ENCODE measurements at regions of chr11 and their contacts with region 1.

Region 1: GRCh38 chr11:17504330-17505107 is 27.9 kb upstream of the ABCC8 start:
- DNase-seq: peak; percentile 59 to 81 (median 64)
- H3K4me3 ChIP-seq: no peak overlapping the region
- H3K4me3 Mint-ChIP-seq: no peak overlapping the region
- H3K27ac ChIP-seq: no peak overlapping the region
- H3K27ac Mint-ChIP-seq: peak overlapping the region in 2 of 8 donors; percentile 6 to 72
- H3K4me1 ChIP-seq: no peaks in the 10 kb centered on the region
- H3K4me1 Mint-ChIP-seq: no peaks in the 10 kb centered on the region
- H3K27me3 ChIP-seq: no peaks in the 10 kb centered on the region
- H3K27me3 Mint-ChIP-seq: peaks cover 5 to 13% of the 10 kb centered on the region in 2 donors

Region 2: DNA sequence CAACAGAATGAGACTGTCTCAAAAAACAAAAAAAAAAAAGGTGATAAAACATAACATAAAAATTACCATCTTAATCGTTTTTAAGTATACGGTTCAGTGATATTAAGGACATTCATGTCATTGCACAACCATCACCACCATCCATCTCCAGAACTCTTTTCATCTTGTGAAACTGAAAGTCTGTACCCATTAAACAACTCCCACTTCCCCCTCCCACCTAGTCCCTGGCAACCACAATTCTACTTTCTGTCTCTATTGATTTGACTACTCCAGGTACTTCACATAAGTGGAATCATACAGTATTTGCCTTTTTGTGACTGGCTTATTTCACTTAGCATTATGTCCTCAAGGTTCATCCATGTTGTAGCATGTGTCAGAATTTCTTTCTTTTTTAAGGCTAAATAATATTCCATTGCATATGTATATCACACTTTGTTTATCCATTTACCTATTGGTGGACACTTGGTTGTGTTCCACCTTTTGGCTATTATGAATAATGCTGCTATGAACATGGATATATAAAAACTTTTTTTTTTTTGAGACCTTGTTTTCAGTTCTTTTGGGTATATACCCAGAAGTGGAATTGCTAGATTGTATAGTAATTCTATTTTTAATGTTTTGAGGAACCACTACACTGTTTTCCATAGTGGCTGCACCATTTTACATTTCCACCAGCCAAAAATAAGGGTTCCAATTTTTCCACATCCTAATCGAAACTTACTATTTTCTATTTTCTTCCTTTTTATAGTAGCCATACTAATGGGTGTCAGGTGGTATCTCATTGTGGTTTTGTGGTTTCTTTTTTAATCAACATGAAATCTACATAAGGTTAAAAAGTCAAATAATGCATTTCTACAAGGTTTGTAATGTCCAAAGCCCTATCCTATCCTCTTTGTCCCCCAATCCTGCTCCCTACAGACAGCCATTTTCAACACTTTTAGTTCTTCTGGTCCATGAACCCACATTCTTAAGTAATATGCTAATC is 273.4 kb before region 1 on chr11:
- CTCF ChIA-PET with region 1: interaction called, 35 read pairs
- POLR2A ChIA-PET with region 1: no interaction called
- DNase-seq: peak in 2 of 5 donors; percentile 30 to 41
- H3K4me3 ChIP-seq: no peak overlapping the region
- H3K4me3 Mint-ChIP-seq: peak overlapping the region in 5 of 7 donors; percentile 18 to 57 (median 35)
- H3K27ac ChIP-seq: no peak overlapping the region
- H3K27ac Mint-ChIP-seq: peak overlapping the region in 3 of 8 donors; percentile 15 to 43 (median 37)
- H3K4me1 ChIP-seq: peaks cover 16% of the 10 kb centered on the region
- H3K4me1 Mint-ChIP-seq: peaks cover 11 to 18% (median 16%) of the 10 kb centered on the region in 3 donors
- H3K27me3 ChIP-seq: no peaks in the 10 kb centered on the region
- H3K27me3 Mint-ChIP-seq: peaks cover 0 to 3% of the 10 kb centered on the region in 2 donors

Measured in CD8-positive, alpha-beta memory T cell (primary cell).